ENCODE measurements at regions of chr4 and their contacts with region 1.

Region 1: GRCh38 chr4:102430461-102430910 is 70.7 kb upstream of the NFKB1 start:
- DNase-seq: no peak
- H3K4me3 ChIP-seq: peak overlapping the region; percentile 62
- H3K27ac ChIP-seq: no peak overlapping the region
- H3K27me3 ChIP-seq: no peaks in the 10 kb centered on the region
- CTCF ChIP-seq: no peak

Region 2: GRCh38 chr4:101730291-101731117 is 700.0 kb before region 1 on chr4:
- CTCF ChIA-PET with region 1: interaction called, 10 read pairs
- POLR2A ChIA-PET with region 1: no interaction called
- DNase-seq: peak; percentile 29
- H3K4me3 ChIP-seq: no peak overlapping the region
- H3K27ac ChIP-seq: no peak overlapping the region
- H3K27me3 ChIP-seq: no peaks in the 10 kb centered on the region
- CTCF ChIP-seq: peak; percentile 74

Region 3: DNA sequence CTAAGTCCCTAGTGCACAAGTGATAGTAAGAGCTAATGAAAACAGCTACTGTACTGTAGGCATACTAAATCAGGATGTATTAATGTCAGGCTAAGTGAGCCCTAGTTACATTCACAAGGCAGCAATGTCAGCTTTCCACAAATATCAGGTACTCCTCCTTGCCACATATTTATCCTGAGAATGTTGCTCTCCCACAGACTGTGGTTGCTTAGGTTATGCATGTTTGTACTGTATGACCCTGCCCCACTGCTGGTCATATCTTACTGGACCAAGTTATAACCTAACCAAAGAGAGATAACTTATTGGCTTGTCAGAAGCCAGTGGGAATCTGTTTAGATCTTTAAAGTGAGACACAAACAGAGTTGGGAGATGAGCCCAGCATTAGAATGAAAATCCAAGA is 326.2 kb before region 1 on chr4:
- CTCF ChIA-PET with region 1: no interaction called
- POLR2A ChIA-PET with region 1: no interaction called
- DNase-seq: no peak
- H3K4me3 ChIP-seq: no peak overlapping the region
- H3K27ac ChIP-seq: no peak overlapping the region
- H3K27me3 ChIP-seq: no peaks in the 10 kb centered on the region
- CTCF ChIP-seq: no peak

Region 4: DNA sequence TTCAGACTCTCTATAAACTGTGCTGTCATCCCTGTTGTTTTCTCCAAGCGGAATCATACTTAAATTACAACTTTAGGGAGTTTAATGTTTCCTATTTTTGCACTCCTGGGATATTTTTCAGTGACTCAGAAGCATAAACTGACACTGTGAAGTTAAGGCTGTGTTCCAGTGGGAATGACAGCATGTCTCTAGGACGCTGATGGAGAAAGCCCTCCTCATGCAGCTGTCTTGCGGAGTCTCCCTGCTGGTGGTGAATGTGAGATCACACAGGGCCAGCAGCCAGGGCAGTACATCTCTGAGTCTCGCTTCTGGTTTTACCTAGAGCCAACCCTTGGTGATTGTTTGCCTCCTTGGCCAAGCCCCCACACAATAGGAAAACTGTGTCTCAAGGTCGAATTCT is 124.0 kb after region 1 on chr4:
- CTCF ChIA-PET with region 1: interaction called, 17 read pairs
- POLR2A ChIA-PET with region 1: no interaction called
- DNase-seq: peak; percentile 51
- H3K4me3 ChIP-seq: no peak overlapping the region
- H3K27ac ChIP-seq: peak overlapping the region; percentile 35
- H3K27me3 ChIP-seq: no peaks in the 10 kb centered on the region
- CTCF ChIP-seq: no peak

Region 5: GRCh38 chr4:102707150-102707549 is 276.7 kb after region 1 on chr4:
- CTCF ChIA-PET with region 1: interaction called, 10 read pairs
- POLR2A ChIA-PET with region 1: no interaction called
- DNase-seq: no peak
- H3K4me3 ChIP-seq: no peak overlapping the region
- H3K27ac ChIP-seq: no peak overlapping the region
- H3K27me3 ChIP-seq: no peaks in the 10 kb centered on the region
- CTCF ChIP-seq: no peak

Region 6: GRCh38 chr4:103046416-103047290 is 616.2 kb after region 1 on chr4:
- CTCF ChIA-PET with region 1: interaction called, 11 read pairs
- POLR2A ChIA-PET with region 1: no interaction called
- DNase-seq: no peak
- H3K4me3 ChIP-seq: no peak overlapping the region
- H3K27ac ChIP-seq: no peak overlapping the region
- H3K27me3 ChIP-seq: no peaks in the 10 kb centered on the region
- CTCF ChIP-seq: peak; percentile 79

Region 7: DNA sequence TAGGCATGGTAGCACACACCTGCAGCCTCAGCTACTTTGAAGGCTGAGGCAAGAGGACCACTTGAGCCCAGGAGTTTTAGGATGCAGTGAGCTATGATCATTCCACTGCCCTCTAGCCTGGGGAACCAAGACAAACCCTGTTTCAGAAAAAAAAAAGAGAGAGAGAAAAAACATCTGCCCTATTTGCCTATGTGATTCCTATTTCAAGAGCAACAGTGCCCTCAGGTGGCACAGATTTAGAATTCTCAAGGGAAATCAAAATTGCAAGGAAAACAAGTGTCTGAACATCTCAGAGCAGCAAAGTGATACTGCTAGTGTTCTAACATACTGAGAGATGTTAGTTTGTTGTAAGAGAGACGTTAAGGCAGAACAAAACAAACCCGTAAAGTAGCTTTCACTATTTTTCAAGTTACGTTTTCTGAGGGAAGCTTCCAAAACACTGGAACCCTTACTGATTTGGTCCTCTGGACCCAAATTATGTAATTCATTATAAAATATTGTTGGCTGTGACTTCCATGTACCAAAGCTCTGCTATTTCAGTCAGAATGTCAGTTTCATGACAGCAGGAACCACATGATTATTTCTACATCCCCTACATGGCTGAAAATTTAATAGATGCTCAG is 661.2 kb after region 1 on chr4:
- CTCF ChIA-PET with region 1: interaction called, 12 read pairs
- POLR2A ChIA-PET with region 1: no interaction called
- DNase-seq: peak; percentile 32
- H3K4me3 ChIP-seq: no peak overlapping the region
- H3K27ac ChIP-seq: no peak overlapping the region
- H3K27me3 ChIP-seq: no peaks in the 10 kb centered on the region
- CTCF ChIP-seq: peak; percentile 73

Measured in AG04450 (cell line).